Transverse colon (tissue), 4 donors: ENCODE measurements at regions of chr9 and their contacts with region 1.

Region 1: GRCh38 chr9:135907431-135908092 is at the start of gene CAMSAP1:
- DNase-seq: peak; percentile 96
- H3K4me3 ChIP-seq: peak within 1 kb of the TSS; percentile 60 to 81 (median 78)
- H3K27ac ChIP-seq: peak within 1 kb of the TSS; percentile 81 to 90 (median 86)
- H3K4me1 ChIP-seq: peaks cover 18 to 43% (median 26%) of the 10 kb centered on the region in 4 donors
- H3K27me3 ChIP-seq: no peaks in the 10 kb centered on the region
- CTCF ChIP-seq: no peak
- EP300 ChIP-seq: no peak
- POLR2A ChIP-seq: peak; percentile 46
- total RNA-seq, gene CAMSAP1: 17.3 to 88.0 (median 23.8) TPM

Region 2: DNA sequence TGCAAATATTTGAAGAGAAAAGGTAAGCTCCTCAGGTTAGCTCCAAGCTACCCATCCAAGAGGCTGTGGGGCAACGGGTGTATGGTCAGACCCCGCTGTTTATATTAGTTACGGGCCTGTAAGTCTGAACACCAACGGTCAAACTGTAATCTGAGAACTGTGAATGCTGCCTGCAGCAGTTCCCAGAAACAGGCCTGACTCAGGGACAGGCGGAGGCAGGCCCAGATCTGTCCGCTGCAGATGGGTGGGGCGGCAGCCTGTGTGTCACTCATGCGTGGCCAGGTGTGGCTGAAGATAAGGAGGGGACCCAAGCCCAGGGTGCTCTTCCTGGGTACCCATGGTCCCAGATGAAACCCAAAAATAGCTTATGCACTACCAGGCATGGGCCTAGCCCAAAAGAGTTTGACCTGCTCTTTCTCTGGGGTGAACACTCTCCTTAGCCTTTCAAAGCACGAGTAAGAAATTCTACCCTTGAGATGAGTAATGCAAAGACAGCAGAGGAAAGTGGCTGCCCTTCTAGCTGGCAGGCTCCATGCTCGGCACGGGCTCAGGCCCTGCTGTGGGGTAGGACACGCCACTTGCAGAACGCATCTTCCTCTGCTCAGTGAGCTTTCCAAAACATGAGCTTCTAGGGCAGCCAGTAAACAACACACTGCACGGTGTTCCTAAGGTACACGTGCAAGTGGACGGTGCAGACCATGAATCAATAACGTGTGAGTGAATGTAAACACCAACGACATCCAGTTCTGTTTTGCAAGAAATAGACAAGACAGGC is 44.5 kb after region 1 on chr9:
- in situ Hi-C with region 1: no loop called
- intact Hi-C with region 1: loop called (anchors 2 kb)
- DNase-seq: no peak
- H3K4me3 ChIP-seq: no peak overlapping the region
- H3K27ac ChIP-seq: no peak overlapping the region
- H3K4me1 ChIP-seq: peaks cover 0 to 3% (median 0%) of the 10 kb centered on the region in 4 donors
- H3K27me3 ChIP-seq: no peaks in the 10 kb centered on the region
- CTCF ChIP-seq: no peak
- EP300 ChIP-seq: no peak
- POLR2A ChIP-seq: no peak

Region 3: GRCh38 chr9:135961277-135961705 is 53.7 kb after region 1 on chr9 and contains the start of gene UBAC1:
- in situ Hi-C with region 1: no loop called
- intact Hi-C with region 1: loop called (anchors 1 kb)
- DNase-seq: peak; percentile 97
- H3K4me3 ChIP-seq: peak within 1 kb of the TSS; percentile 86 to 98 (median 92)
- H3K27ac ChIP-seq: peak within 1 kb of the TSS; percentile 93 to 97 (median 94)
- H3K4me1 ChIP-seq: peaks cover 9 to 19% (median 14%) of the 10 kb centered on the region in 4 donors
- H3K27me3 ChIP-seq: no peaks in the 10 kb centered on the region
- CTCF ChIP-seq: peak in 4 of 5 experiments; percentile 37 to 62 (median 46)
- EP300 ChIP-seq: no peak
- POLR2A ChIP-seq: no peak
- total RNA-seq, gene UBAC1: 42.6 to 91.9 (median 62.9) TPM